GM12878 (cell line): ENCODE measurements at regions of chr18 and their contacts with region 1.

Region 1: GRCh38 chr18:44796442-44797428 is 116.0 kb downstream of the SETBP1 start:
- DNase-seq: no peak
- ATAC-seq: peak; percentile 70
- H3K4me3 ChIP-seq: no peak overlapping the region
- H3K27ac ChIP-seq: no peak overlapping the region
- H3K4me1 ChIP-seq: peaks cover 24% of the 10 kb centered on the region
- H3K27me3 ChIP-seq: no peaks in the 10 kb centered on the region
- CTCF ChIP-seq: no peak
- EP300 ChIP-seq: no peak
- POLR2A ChIP-seq: no peak
- RAD21 ChIP-seq: no peak

Region 2: GRCh38 chr18:44687421-44687820 is 109.3 kb before region 1 on chr18:
- CTCF ChIA-PET with region 1: interaction called, 3 read pairs
- POLR2A ChIA-PET with region 1: interaction called, 5 read pairs
- RAD21 ChIA-PET with region 1: interaction called, 10 read pairs
- SMC1A ChIA-PET with region 1: interaction called, 11 read pairs
- in situ Hi-C with region 1: no loop called
- intact Hi-C with region 1: no loop called
- DNase-seq: no peak
- ATAC-seq: no peak
- H3K4me3 ChIP-seq: no peak overlapping the region
- H3K27ac ChIP-seq: no peak overlapping the region
- H3K4me1 ChIP-seq: peaks cover 12% of the 10 kb centered on the region
- H3K27me3 ChIP-seq: 0 out of 4 replicates have a peak, but pooled peaks cover 0 to 3% of the 10 kb centered on the region in 2 experiments
- CTCF ChIP-seq: no peak
- EP300 ChIP-seq: no peak
- POLR2A ChIP-seq: no peak
- RAD21 ChIP-seq: no peak

Region 3: GRCh38 chr18:44786688-44787087 is 10.0 kb before region 1 on chr18:
- CTCF ChIA-PET with region 1: interaction called, 31 read pairs
- POLR2A ChIA-PET with region 1: interaction called, 6 read pairs
- RAD21 ChIA-PET with region 1: interaction called, 14 read pairs
- SMC1A ChIA-PET with region 1: interaction called, 42 read pairs
- in situ Hi-C with region 1: no loop called
- intact Hi-C with region 1: no loop called
- DNase-seq: no peak
- ATAC-seq: peak; percentile 85
- H3K4me3 ChIP-seq: peak overlapping the region; percentile 41; the same call in 1 of the 2 replicates
- H3K27ac ChIP-seq: peak overlapping the region; percentile 64
- H3K4me1 ChIP-seq: peaks cover 20% of the 10 kb centered on the region
- H3K27me3 ChIP-seq: no peaks in the 10 kb centered on the region
- CTCF ChIP-seq: no peak
- EP300 ChIP-seq: no peak
- POLR2A ChIP-seq: no peak
- RAD21 ChIP-seq: no peak

Region 4: DNA sequence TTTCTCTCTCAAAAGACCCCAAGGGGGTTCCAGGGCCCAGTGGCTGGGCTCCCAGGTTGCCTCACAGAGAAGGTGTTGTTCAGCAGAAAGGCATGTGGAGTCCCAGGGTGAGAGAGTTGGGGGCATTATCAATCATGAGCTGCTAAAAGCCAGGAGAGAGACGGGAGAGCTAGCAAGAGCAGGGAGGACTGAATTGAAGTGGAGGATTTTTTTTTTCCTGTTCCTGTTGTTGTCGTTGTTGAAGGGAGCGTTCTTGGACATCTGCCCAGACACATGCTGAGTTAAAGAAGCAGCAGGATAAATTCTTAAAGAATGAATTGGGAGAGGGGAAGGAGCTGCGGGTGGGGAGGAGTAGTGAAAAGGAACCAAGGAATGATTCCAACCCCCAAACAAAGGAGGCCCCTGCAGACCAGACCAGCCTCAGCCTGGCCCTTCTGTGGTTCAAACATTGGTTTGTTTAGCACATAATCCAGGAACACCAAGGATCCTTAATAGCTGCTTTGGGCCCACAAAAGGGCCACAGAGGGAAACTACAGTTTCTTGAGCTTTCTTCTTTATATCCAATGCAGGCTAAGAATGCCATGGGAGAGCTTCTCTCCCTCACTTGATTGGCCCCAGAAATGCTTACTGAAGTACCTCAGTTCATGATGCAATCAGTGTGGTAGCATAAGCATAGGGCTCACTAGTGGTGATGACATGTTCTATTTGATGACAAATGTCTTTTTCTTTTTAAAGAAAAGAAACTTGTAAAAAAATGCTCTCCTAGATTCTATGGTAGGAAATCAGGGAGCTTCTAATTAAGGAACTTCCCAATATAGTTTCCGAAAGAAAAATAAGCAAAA is 29.9 kb after region 1 on chr18:
- CTCF ChIA-PET with region 1: interaction called, 5 read pairs
- POLR2A ChIA-PET with region 1: interaction called, 10 read pairs
- RAD21 ChIA-PET with region 1: interaction called, 5 read pairs
- SMC1A ChIA-PET with region 1: interaction called, 12 read pairs
- in situ Hi-C with region 1: no loop called
- intact Hi-C with region 1: loop called (anchors 2 kb)
- DNase-seq: no peak
- ATAC-seq: no peak
- H3K4me3 ChIP-seq: no peak overlapping the region
- H3K27ac ChIP-seq: no peak overlapping the region
- H3K4me1 ChIP-seq: no peaks in the 10 kb centered on the region
- H3K27me3 ChIP-seq: no peaks in the 10 kb centered on the region
- CTCF ChIP-seq: no peak
- EP300 ChIP-seq: no peak
- POLR2A ChIP-seq: no peak
- RAD21 ChIP-seq: no peak

Region 5: DNA sequence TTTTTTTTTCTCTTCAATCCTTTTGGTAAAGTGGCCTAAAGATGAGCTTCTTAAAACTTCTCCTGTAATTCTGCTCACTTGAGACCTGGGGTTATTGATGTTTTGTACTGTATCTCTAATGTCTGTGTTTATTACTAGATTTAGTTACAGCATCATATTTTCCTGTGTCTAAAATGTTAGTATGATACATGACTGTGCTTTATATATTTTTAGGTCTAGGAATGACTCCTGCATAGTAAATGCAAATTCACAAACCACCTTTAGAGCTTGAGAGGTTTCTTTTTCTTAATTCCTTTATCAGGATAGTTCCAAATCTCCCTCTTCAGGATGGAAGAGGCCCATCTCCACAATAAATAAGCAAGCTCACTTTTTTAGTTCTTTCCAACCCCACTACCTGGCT is 81.6 kb after region 1 on chr18:
- CTCF ChIA-PET with region 1: no interaction called
- POLR2A ChIA-PET with region 1: no interaction called
- RAD21 ChIA-PET with region 1: no interaction called
- SMC1A ChIA-PET with region 1: no interaction called
- in situ Hi-C with region 1: no loop called
- intact Hi-C with region 1: no loop called
- DNase-seq: no peak
- ATAC-seq: no peak
- H3K4me3 ChIP-seq: no peak overlapping the region
- H3K27ac ChIP-seq: no peak overlapping the region
- H3K4me1 ChIP-seq: no peaks in the 10 kb centered on the region
- H3K27me3 ChIP-seq: no peaks in the 10 kb centered on the region
- CTCF ChIP-seq: no peak
- EP300 ChIP-seq: no peak
- POLR2A ChIP-seq: no peak
- RAD21 ChIP-seq: no peak

Region 6: GRCh38 chr18:44909191-44909719 is 112.5 kb after region 1 on chr18:
- CTCF ChIA-PET with region 1: interaction called, 3 read pairs
- POLR2A ChIA-PET with region 1: no interaction called
- RAD21 ChIA-PET with region 1: interaction called, 6 read pairs
- SMC1A ChIA-PET with region 1: interaction called, 16 read pairs
- in situ Hi-C with region 1: no loop called
- intact Hi-C with region 1: no loop called
- DNase-seq: peak; percentile 68
- ATAC-seq: peak; percentile 85
- H3K4me3 ChIP-seq: peak overlapping the region; percentile 29; the same call in 1 of the 2 replicates
- H3K27ac ChIP-seq: 0 out of 2 replicates have a peak overlapping the region, but pooled peaks have one; percentile 13
- H3K4me1 ChIP-seq: peaks cover 45% of the 10 kb centered on the region
- H3K27me3 ChIP-seq: no peaks in the 10 kb centered on the region
- CTCF ChIP-seq: no peak
- EP300 ChIP-seq: peak in 1 of 2 experiments; percentile 53; a peak in 2 of 4 replicates
- POLR2A ChIP-seq: no peak
- RAD21 ChIP-seq: 0 out of 2 replicates have a peak, but pooled peaks have one; percentile 11